Right ventricle myocardium inferior (tissue), 1 donor: ENCODE measurements at regions of chr3 and their contacts with region 1.

Region 1: GRCh38 chr3:197224034-197224444 is 74.4 kb downstream of the DLG1 start:
- DNase-seq: no peak
- ATAC-seq: no peak

Region 2: GRCh38 chr3:197456261-197457091 is 232.4 kb after region 1 on chr3:
- intact Hi-C with region 1: loop called (anchors 10 kb)
- DNase-seq: peak; percentile 91
- ATAC-seq: peak; percentile 92

Region 3: DNA sequence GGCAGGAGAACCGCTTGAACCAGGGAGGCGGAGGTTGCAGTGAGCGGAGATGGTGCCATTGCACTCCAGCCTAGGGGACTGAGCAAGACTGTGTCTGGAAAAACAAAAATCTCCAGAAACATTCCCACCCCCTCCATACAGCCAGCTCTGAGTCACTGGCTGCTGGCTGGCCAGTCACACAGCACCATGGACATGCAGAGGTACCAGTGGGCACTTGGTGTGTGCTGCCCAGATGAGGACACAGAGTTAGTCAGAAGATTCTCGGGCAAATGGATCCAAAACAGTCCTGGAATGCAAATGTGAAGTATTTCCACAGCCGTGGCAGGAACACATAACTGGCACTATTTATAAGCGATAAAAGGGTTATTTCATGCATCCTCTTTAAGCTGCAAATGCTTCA is 287.1 kb after region 1 on chr3:
- intact Hi-C with region 1: loop called (anchors 1 kb)
- DNase-seq: no peak
- ATAC-seq: no peak